ENCODE measurements at regions of chr20 and their contacts with region 1.

Region 1: GRCh38 chr20:49853640-49854039 is 41.0 kb downstream of the SLC9A8 start:
- DNase-seq: no peak
- ATAC-seq: no peak

Region 2: DNA sequence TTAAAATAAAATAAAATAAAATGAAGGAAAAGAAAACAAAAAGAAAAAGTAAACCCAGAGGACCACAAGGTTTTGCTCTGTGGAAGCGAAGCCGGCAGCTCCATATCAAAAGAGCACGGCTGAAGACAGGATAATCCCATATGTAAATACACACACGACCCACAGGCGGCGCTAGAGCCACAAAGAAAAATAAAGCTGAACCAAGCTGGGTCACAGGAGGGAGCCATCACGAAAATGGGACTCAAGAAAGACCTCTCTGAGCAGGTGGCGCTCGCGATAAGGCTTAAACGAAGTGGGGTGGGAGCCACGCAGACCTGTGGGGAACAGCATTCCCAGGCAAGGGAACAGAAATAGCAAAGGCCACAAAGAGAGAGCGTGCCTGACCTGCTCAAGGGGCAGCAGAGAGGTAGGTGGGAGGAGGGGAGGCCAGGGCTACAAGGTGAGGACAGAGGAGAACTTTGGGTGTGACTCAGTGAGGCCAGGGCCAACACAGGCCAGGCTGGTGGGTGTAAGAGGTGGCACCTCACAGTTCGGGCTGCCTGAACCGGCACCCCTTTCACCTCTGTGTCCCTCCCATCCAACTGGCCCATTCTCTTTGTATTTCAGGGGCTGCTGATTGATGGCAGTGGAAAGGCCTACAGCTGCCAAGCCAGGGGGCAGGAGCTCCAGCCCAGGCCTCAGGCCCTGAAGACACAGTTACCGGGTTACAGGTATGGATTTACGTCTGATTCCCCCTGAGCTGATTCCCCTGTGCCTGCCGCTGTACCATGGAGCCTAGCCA is 311.7 kb before region 1 on chr20:
- intact Hi-C with region 1: loop called in 1 of 2 experiments (anchors 10 kb)
- DNase-seq: peak; percentile 65
- ATAC-seq: peak; percentile 51 to 76